Common myeloid progenitor, CD34-positive (primary cell): ENCODE measurements at regions of chr6 and their contacts with region 1.

Region 1: DNA sequence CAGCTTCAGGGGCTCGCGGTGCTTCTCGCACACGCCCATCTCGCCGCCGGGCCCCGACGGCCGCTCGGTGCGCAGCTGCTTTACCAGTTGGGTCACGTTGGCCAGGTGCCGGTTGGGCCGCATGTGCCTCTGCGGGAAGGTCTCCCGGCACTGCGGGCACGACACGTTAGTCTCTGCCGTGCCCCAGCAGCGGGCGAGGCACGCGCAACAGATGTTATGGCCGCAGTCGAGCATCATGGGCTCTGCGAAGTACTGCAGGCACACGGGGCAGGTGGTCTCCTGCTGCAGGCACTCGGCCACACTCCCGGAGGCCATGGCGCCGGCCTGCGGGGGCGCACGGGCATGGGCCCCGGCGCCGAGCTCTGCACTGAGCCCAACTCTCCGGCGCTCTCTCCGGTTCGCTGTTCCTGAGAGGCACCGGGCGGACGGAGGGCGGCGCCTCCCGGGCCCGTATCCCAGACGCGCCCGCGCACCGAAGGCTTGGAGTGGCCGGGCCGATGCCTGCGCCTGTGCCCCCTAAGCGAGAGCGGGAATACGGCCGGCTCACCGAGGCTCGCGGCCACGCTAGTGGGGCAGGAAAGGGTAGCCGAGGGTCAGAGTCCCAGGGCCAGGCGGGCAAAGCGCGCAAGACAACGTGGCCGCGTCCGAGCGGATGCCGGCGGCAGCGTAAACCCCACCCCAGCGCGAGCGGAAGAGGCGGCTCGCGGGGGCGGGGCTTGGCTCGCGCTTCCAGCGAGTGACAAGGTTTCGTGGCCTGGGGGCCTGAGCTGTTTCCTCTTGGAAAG is at the start of gene TRIM27:
- DNase-seq: peak; percentile 75 to 84 (median 81)
- H3K4me3 ChIP-seq: peak within 1 kb of the TSS; percentile 70 to 97 (median 94)
- H3K27ac ChIP-seq: peak within 1 kb of the TSS; percentile 79 to 91
- H3K4me1 ChIP-seq: peaks cover 6 to 20% (median 18%) of the 10 kb centered on the region in 4 experiments
- H3K27me3 ChIP-seq: no peaks in the 10 kb centered on the region

Region 2: GRCh38 chr6:28910902-28911690 is 12.4 kb before region 1 on chr6:
- CTCF ChIA-PET with region 1: interaction called, 28 read pairs
- POLR2A ChIA-PET with region 1: interaction called, 5 read pairs
- DNase-seq: no peak
- H3K4me3 ChIP-seq: no peak overlapping the region
- H3K27ac ChIP-seq: no peak overlapping the region
- H3K4me1 ChIP-seq: peaks cover 0 to 2% (median 0%) of the 10 kb centered on the region in 4 experiments
- H3K27me3 ChIP-seq: no peaks in the 10 kb centered on the region

Region 3: GRCh38 chr6:28940858-28941680 is 17.6 kb after region 1 on chr6:
- CTCF ChIA-PET with region 1: interaction called, 11 read pairs
- POLR2A ChIA-PET with region 1: interaction called, 6 read pairs
- DNase-seq: peak; percentile 82 to 92 (median 92)
- H3K4me3 ChIP-seq: peak overlapping the region; percentile 62 to 98 (median 80)
- H3K27ac ChIP-seq: peak overlapping the region in 1 of 2 experiments; percentile 77
- H3K4me1 ChIP-seq: peaks cover 11 to 48% (median 28%) of the 10 kb centered on the region in 4 experiments
- H3K27me3 ChIP-seq: no peaks in the 10 kb centered on the region